Breast epithelium (tissue), 4 donors: ENCODE measurements at regions of chr3 and their contacts with region 1.

Region 1: GRCh38 chr3:153331676-153332182 is 169.7 kb downstream of the RAP2B start:
- DNase-seq: no peak
- H3K4me3 ChIP-seq: no peak overlapping the region
- H3K27ac ChIP-seq: no peak overlapping the region
- H3K4me1 ChIP-seq: no peaks in the 10 kb centered on the region
- H3K27me3 ChIP-seq: no peaks in the 10 kb centered on the region
- CTCF ChIP-seq: no peak
- POLR2A ChIP-seq: no peak

Region 2: GRCh38 chr3:152589644-152590043 is 742.1 kb before region 1 on chr3:
- intact Hi-C with region 1: no loop called
- DNase-seq: no peak
- H3K4me3 ChIP-seq: no peak overlapping the region
- H3K27ac ChIP-seq: no peak overlapping the region
- H3K4me1 ChIP-seq: no peaks in the 10 kb centered on the region
- H3K27me3 ChIP-seq: no peaks in the 10 kb centered on the region
- CTCF ChIP-seq: no peak
- POLR2A ChIP-seq: no peak

Region 3: GRCh38 chr3:153313302-153313965 is 18.3 kb before region 1 on chr3:
- intact Hi-C with region 1: loop called (anchors 1 kb)
- DNase-seq: no peak
- H3K4me3 ChIP-seq: no peak overlapping the region
- H3K27ac ChIP-seq: no peak overlapping the region
- H3K4me1 ChIP-seq: no peaks in the 10 kb centered on the region
- H3K27me3 ChIP-seq: no peaks in the 10 kb centered on the region
- CTCF ChIP-seq: no peak
- POLR2A ChIP-seq: no peak